ENCODE measurements at regions of chr6 and their contacts with region 1.

Region 1: GRCh38 chr6:159654483-159655098 is 38.5 kb downstream of the SOD2 start:
- DNase-seq: peak; percentile 65
- ATAC-seq: peak; percentile 51
- H3K4me3 ChIP-seq: no peak overlapping the region
- H3K27ac ChIP-seq: no peak overlapping the region
- H3K4me1 ChIP-seq: no peaks in the 10 kb centered on the region
- H3K27me3 ChIP-seq: no peaks in the 10 kb centered on the region
- CTCF ChIP-seq: peak; percentile 63
- EP300 ChIP-seq: no peak
- POLR2A ChIP-seq: no peak
- RAD21 ChIP-seq: no peak

Region 2: GRCh38 chr6:159174263-159174969 is 480.2 kb before region 1 on chr6:
- CTCF ChIA-PET with region 1: interaction called, 25 read pairs
- POLR2A ChIA-PET with region 1: no interaction called
- in situ Hi-C with region 1: loop called (anchors 5 kb)
- intact Hi-C with region 1: loop called (anchors 2 kb)
- DNase-seq: peak; percentile 46
- ATAC-seq: peak; percentile 97
- H3K4me3 ChIP-seq: no peak overlapping the region
- H3K27ac ChIP-seq: no peak overlapping the region
- H3K4me1 ChIP-seq: no peaks in the 10 kb centered on the region
- H3K27me3 ChIP-seq: peaks cover 5 to 48% of the 10 kb centered on the region in 2 experiments
- CTCF ChIP-seq: peak; percentile 93
- EP300 ChIP-seq: no peak
- POLR2A ChIP-seq: no peak
- RAD21 ChIP-seq: peak; percentile 82

Region 3: GRCh38 chr6:159217595-159218275 is 436.9 kb before region 1 on chr6:
- CTCF ChIA-PET with region 1: interaction called, 4 read pairs
- POLR2A ChIA-PET with region 1: no interaction called
- in situ Hi-C with region 1: loop called (anchors 5 kb)
- intact Hi-C with region 1: loop called (anchors 2 kb)
- DNase-seq: peak; percentile 29
- ATAC-seq: peak; percentile 95
- H3K4me3 ChIP-seq: no peak overlapping the region
- H3K27ac ChIP-seq: no peak overlapping the region
- H3K4me1 ChIP-seq: no peaks in the 10 kb centered on the region
- H3K27me3 ChIP-seq: peaks cover 9 to 46% of the 10 kb centered on the region in 2 experiments
- CTCF ChIP-seq: peak; percentile 79
- EP300 ChIP-seq: no peak
- POLR2A ChIP-seq: no peak
- RAD21 ChIP-seq: peak; percentile 76

Region 4: DNA sequence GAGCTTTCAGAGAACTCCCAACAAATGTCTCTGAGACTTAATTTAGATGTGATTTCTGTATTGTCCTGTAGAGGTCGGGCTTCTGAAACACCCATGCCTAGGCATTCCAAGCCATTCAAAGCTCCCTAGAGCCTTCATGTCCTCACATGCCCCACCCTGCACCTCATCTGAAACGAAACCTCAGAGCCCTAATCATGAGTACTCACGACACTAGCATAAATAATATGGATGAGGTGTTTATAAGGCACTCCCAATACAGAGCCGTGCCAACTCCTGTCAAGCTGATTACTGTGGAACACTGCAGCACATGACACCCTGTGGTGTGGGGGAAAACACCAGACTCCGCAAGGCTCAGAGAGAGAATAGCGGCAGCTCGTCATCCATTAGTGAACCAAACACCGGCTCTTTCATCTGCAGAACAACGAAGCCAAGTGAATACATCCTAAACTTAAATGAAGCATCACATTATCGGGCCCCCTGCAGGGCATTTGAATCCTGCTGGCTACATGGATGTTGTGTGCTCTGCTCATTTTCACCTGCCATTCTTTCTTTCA is 401.6 kb before region 1 on chr6:
- CTCF ChIA-PET with region 1: interaction called, 9 read pairs
- POLR2A ChIA-PET with region 1: no interaction called
- in situ Hi-C with region 1: no loop called
- intact Hi-C with region 1: loop called (anchors 2 kb)
- DNase-seq: peak; percentile 52
- ATAC-seq: peak; percentile 85
- H3K4me3 ChIP-seq: no peak overlapping the region
- H3K27ac ChIP-seq: no peak overlapping the region
- H3K4me1 ChIP-seq: no peaks in the 10 kb centered on the region
- H3K27me3 ChIP-seq: peaks cover 0 to 3% of the 10 kb centered on the region in 2 experiments; a peak in 3 of 5 replicates
- CTCF ChIP-seq: peak; percentile 71
- EP300 ChIP-seq: no peak
- POLR2A ChIP-seq: no peak
- RAD21 ChIP-seq: no peak

Region 5: GRCh38 chr6:159852877-159853276 is 198.3 kb after region 1 on chr6:
- CTCF ChIA-PET with region 1: no interaction called
- POLR2A ChIA-PET with region 1: no interaction called
- in situ Hi-C with region 1: no loop called
- intact Hi-C with region 1: no loop called
- DNase-seq: no peak
- ATAC-seq: peak; percentile 52; the same call in 2 of the 3 replicates
- H3K4me3 ChIP-seq: no peak overlapping the region
- H3K27ac ChIP-seq: no peak overlapping the region
- H3K4me1 ChIP-seq: 0 out of 2 replicates have a peak, but pooled peaks cover 4% of the 10 kb centered on the region
- H3K27me3 ChIP-seq: no peaks in the 10 kb centered on the region
- CTCF ChIP-seq: peak; percentile 45
- EP300 ChIP-seq: no peak
- POLR2A ChIP-seq: no peak
- RAD21 ChIP-seq: no peak

Measured in HepG2 (cell line).